ENCODE measurements at regions of chr17 and their contacts with region 1.

Region 1: GRCh38 chr17:13002766-13003451 is 14.9 kb downstream of the ELAC2 start:
- DNase-seq: peak in 1 of 2 donors; percentile 92
- ATAC-seq: peak; percentile 83

Region 2: DNA sequence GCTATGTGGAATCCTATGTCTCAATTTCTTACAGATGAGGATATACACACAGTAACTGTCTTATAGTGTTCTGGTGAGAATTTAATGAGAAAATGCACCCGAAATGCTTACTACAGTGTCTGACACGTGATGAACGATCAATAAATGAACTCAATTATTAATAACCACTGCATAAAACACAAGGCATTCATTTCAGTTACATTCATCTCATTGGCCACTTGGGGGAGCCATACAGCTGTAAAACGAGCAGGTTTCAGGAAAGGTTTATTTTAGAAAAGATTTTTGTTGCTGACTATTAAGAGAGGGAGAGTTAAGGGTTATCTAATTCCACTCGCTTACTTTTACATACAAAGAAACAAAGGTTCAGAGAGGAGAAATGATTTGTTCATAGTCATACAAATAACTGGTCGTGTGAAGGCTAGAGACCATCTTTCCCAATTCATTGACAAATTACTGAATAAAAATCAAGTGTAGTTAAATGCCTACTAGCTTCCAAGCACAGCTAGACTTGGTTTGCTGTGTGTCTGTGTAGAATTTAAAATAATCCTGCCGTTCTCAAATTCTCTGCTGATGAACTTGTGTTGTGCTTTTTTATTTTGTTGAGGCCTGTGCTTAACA is 822.2 kb before region 1 on chr17:
- intact Hi-C with region 1: loop called in 1 of 2 experiments (anchors 10 kb)
- DNase-seq: peak in 1 of 2 donors; percentile 16
- ATAC-seq: no peak

Region 3: DNA sequence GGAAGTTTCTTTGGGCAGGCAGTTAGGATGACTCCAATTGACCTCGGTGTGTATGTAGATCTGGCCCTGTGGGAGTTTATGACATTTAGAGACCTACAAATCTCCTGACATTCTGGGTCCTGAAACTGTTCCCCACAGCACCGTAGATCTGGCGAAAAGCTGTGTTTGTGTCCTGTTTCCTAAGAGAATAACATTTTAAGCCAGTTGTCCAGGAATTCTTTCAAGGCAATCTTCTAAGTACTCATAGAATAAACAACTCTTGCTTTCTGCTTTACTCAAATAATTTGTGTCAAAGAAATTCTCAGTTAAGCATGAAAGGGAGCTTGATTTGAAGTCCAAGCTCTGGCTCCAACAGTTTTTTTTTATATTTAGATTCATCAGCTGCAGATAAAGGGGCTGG is 93.4 kb after region 1 on chr17:
- intact Hi-C with region 1: no loop called
- DNase-seq: no peak
- ATAC-seq: no peak

Measured in left colon (tissue), 2 donors.